ENCODE measurements at regions of chr16 and their contacts with region 1.

Region 1: DNA sequence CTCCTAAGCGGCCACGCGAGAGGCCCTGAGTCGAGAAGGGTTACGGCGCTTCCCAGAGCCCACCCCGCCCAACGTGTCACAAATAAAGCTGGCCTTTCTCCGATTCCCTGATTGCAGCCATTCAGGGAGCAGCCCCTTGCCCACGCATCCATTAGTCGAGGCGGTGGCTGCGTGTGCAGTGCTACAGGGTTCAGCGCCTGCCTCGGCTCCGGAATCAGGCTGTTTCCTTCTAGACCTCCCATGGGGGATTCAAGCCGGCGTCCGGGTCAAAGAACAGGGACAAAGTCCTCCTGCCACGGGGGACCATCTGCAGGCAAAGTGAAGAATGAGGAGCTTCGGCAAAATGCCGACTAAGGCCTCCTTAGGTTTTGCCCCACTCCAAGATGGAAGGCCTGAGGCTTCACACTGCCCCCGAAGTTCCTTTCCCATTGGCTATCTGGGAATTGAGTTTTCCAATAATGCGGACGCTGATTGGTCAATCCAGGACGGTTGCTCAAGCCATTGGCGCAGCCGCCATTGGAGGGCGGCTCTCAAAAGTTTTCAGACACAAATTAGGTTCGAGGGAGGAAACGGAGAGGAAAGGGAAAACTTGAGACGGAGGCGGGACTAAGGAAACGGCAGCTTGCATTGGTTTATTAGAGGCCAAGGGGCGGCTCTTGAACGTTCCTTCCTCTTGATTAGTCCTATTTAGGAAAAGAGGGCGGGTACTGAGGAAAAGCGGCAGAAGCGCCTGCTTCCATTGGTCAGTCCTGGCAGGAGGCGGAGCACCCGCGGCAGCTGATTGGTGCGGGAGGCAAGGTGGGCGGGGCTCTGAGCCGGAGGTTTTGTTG is 430 bp upstream of the KATNB1 start:
- DNase-seq: peak; percentile 99 to 100
- H3K4me3 ChIP-seq: peak overlapping the region; percentile 82 to 91
- H3K27ac ChIP-seq: peak overlapping the region; percentile 79 to 88
- H3K4me1 ChIP-seq: peaks cover 9 to 18% of the 10 kb centered on the region in 2 donors
- H3K27me3 ChIP-seq: no peaks in the 10 kb centered on the region
- CTCF ChIP-seq: no peak

Region 2: GRCh38 chr16:56425439-56425832 is 1309.7 kb before region 1 on chr16 and contains the start of gene AMFR:
- intact Hi-C with region 1: loop called (anchors 10 kb)
- DNase-seq: peak in 1 of 2 donors; percentile 78
- H3K4me3 ChIP-seq: peak within 1 kb of the TSS; percentile 95 to 99
- H3K27ac ChIP-seq: peak within 1 kb of the TSS; percentile 84 to 97
- H3K4me1 ChIP-seq: peaks cover 0 to 21% of the 10 kb centered on the region in 2 donors
- H3K27me3 ChIP-seq: no peaks in the 10 kb centered on the region
- CTCF ChIP-seq: peak in 1 of 3 experiments; percentile 89
- total RNA-seq, gene AMFR: 112 TPM

Region 3: DNA sequence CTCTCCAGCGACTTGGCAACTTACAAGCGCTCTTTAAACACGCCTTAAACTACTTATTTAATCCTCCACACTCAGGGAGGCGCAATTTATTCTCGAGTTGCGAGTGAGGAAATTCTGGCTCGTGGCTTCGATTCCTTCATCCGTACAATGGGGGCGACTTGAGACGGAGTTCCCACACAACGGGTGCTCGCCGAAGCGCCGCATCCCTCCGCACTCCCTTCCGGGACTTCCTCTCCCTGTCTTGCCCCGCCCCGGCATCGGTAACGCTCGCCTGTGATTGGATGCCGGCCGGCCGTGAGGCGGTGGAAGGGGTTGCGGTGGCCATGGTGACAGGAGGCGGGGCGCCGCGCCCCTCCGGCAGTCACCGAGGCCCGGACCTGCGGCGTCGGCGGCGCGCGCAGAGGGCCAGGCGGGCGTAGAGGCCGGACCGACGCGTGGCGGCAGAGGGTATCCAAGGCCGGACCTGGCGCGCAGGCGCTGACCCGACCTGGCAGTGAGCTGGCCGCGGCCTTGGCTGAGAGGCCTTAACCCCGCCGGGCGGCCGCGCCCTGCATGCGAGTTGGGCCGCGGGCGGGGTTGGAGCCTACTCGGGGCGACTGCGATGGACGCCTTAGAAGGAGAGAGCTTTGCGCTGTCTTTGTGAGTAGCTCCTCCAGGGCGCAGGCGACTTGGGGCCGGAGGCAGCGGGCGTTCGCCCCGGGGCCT is 490.2 kb before region 1 on chr16 and contains the start of gene ARL2BP:
- intact Hi-C with region 1: loop called (anchors 10 kb)
- DNase-seq: peak; percentile 97 to 99
- H3K4me3 ChIP-seq: peak within 1 kb of the TSS; percentile 79 to 81
- H3K27ac ChIP-seq: peak within 1 kb of the TSS; percentile 92 to 96
- H3K4me1 ChIP-seq: peaks cover 2 to 12% of the 10 kb centered on the region in 2 donors
- H3K27me3 ChIP-seq: no peaks in the 10 kb centered on the region
- CTCF ChIP-seq: no peak
- total RNA-seq, gene ARL2BP: 44.1 TPM

Region 4: GRCh38 chr16:57265850-57266530 is 469.1 kb before region 1 on chr16:
- intact Hi-C with region 1: no loop called
- DNase-seq: no peak
- H3K4me3 ChIP-seq: no peak overlapping the region
- H3K27ac ChIP-seq: no peak overlapping the region
- H3K4me1 ChIP-seq: peaks cover 0 to 5% of the 10 kb centered on the region in 2 donors
- H3K27me3 ChIP-seq: no peaks in the 10 kb centered on the region
- CTCF ChIP-seq: no peak

Region 5: DNA sequence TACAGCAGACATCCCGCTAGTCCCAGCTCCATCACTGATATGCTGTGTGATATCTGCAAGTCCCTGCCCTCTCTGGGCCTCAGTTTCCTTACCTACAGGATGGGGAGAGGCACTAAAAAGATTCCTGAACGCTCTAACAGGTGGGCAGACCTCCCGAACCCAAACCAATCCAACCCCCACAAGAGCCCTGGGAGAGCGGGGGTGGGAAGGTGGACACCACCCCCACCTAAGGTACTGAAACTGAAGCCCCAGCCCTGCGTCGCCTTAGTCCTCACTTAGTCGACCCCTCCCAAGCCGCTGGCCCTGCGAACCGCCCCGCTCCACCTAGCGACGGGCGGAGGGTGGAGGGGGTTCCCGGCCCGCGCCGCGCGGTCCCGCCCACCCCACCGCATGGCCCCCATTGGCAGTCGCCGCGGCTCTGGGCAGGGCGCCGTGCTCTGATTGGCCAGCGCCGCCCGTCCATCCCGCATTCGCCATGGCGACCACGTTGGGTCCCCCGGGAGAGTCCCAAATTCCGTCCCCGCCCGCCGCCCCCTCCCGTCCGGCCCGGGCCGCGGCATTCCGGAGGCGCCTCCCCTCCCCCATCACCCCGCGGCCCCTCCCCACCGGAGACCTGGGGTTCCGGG is 199.3 kb before region 1 on chr16:
- intact Hi-C with region 1: loop called (anchors 2 kb)
- DNase-seq: peak; percentile 74 to 97
- H3K4me3 ChIP-seq: peak overlapping the region; percentile 92 to 93
- H3K27ac ChIP-seq: peak overlapping the region; percentile 89 to 90
- H3K4me1 ChIP-seq: peaks cover 19 to 24% of the 10 kb centered on the region in 2 donors
- H3K27me3 ChIP-seq: no peaks in the 10 kb centered on the region
- CTCF ChIP-seq: peak in 2 of 3 experiments; percentile 21 to 27

Region 6: GRCh38 chr16:57781741-57782606 is 46.8 kb after region 1 on chr16:
- intact Hi-C with region 1: no loop called
- DNase-seq: no peak
- H3K4me3 ChIP-seq: no peak overlapping the region
- H3K27ac ChIP-seq: no peak overlapping the region
- H3K4me1 ChIP-seq: no peaks in the 10 kb centered on the region
- H3K27me3 ChIP-seq: no peaks in the 10 kb centered on the region
- CTCF ChIP-seq: no peak

Region 7: GRCh38 chr16:57802341-57803133 is 67.4 kb after region 1 on chr16 and contains the start of gene KIFC3:
- intact Hi-C with region 1: loop called (anchors 2 kb)
- DNase-seq: peak; percentile 50 to 95
- H3K4me3 ChIP-seq: peak within 1 kb of the TSS; percentile 68 to 84
- H3K27ac ChIP-seq: peak within 1 kb of the TSS; percentile 81 to 85
- H3K4me1 ChIP-seq: peaks cover 3 to 28% of the 10 kb centered on the region in 2 donors
- H3K27me3 ChIP-seq: no peaks in the 10 kb centered on the region
- CTCF ChIP-seq: peak in 2 of 3 experiments; percentile 3 to 76
- total RNA-seq, gene KIFC3: 54.9 TPM

Region 8: GRCh38 chr16:58000706-58001676 is 265.9 kb after region 1 on chr16 and contains the start of gene USB1:
- intact Hi-C with region 1: loop called (anchors 1 kb)
- DNase-seq: peak; percentile 37 to 90
- H3K4me3 ChIP-seq: peak within 1 kb of the TSS; percentile 78 to 93
- H3K27ac ChIP-seq: peak within 1 kb of the TSS; percentile 85 to 95
- H3K4me1 ChIP-seq: peaks cover 12 to 19% of the 10 kb centered on the region in 2 donors
- H3K27me3 ChIP-seq: no peaks in the 10 kb centered on the region
- CTCF ChIP-seq: peak; percentile 47 to 64 (median 63)
- total RNA-seq, gene USB1: 133 TPM

Region 9: GRCh38 chr16:58515125-58515870 is 780.2 kb after region 1 on chr16 and contains the start of gene SETD6:
- intact Hi-C with region 1: loop called (anchors 10 kb)
- DNase-seq: peak; percentile 64 to 92
- H3K4me3 ChIP-seq: peak within 1 kb of the TSS; percentile 89 to 92
- H3K27ac ChIP-seq: peak within 1 kb of the TSS; percentile 73 to 79
- H3K4me1 ChIP-seq: peaks cover 6 to 13% of the 10 kb centered on the region in 2 donors
- H3K27me3 ChIP-seq: no peaks in the 10 kb centered on the region
- CTCF ChIP-seq: peak; percentile 20 to 31 (median 25)
- total RNA-seq, gene SETD6: 24.4 TPM

Measured in ascending aorta (tissue), 2 donors.